ENCODE measurements at regions of chr12 and their contacts with region 1.

Region 1: DNA sequence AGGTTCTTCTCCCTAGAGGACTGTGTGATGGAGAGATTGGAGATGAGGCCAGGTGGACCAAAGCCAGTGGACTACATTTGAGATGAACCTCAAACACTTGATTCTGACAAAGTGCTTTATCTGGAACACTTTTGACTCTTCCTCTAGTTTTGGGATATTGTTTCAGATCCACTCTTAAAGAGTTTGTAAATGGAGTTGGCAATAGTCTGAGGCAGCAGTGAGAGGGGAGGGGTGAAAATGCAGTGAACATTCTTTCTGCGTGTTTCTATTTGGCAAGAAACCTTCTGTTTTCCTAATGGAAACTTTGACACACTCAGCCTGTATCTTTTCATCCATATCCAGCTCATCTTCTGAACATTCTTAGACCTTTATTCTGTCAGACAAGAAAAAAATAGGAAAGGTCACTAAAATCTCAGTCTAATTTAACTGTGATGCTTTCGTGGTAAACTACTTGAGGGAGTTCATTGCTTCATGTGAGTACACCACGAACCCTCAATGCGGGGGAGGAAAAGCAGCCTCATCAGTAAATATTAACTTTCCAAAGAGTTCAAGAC is 57.4 kb upstream of the KCNJ8 start:
- DNase-seq: peak in 1 of 2 donors; percentile 88
- H3K4me3 ChIP-seq: no peak overlapping the region
- H3K27ac ChIP-seq: peak overlapping the region; percentile 71
- H3K4me1 ChIP-seq: peaks cover 29% of the 10 kb centered on the region
- H3K27me3 ChIP-seq: no peaks in the 10 kb centered on the region
- CTCF ChIP-seq: no peak
- POLR2A ChIP-seq: no peak

Region 2: DNA sequence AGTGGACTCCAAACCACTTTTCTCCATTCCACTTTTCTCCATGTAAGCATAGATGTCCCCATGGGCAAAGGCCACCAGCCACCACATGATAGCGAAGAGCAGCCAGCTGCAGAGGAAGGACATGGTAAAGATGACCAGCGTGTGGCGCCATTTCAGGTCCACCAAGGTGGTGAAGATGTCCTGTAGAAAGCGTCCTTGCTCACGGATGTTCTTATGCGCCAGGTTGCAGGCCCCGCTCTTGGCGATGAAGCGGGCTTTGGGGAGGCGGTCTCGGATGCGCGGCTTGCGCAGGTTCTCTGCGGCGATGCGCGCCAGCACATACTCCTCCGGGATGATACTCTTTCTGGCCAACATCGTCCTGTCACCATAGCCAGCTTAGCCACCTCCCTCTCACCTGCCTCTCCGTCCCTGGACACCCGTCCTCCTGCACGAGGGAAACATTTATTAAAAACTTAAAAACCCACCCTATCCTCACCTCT is 58.6 kb before region 1 on chr12:
- intact Hi-C with region 1: loop called (anchors 10 kb)
- DNase-seq: no peak
- H3K4me3 ChIP-seq: peak overlapping the region; percentile 60 to 72
- H3K27ac ChIP-seq: peak overlapping the region; percentile 82
- H3K4me1 ChIP-seq: peaks cover 7% of the 10 kb centered on the region
- H3K27me3 ChIP-seq: no peaks in the 10 kb centered on the region
- CTCF ChIP-seq: no peak
- POLR2A ChIP-seq: no peak

Region 3: DNA sequence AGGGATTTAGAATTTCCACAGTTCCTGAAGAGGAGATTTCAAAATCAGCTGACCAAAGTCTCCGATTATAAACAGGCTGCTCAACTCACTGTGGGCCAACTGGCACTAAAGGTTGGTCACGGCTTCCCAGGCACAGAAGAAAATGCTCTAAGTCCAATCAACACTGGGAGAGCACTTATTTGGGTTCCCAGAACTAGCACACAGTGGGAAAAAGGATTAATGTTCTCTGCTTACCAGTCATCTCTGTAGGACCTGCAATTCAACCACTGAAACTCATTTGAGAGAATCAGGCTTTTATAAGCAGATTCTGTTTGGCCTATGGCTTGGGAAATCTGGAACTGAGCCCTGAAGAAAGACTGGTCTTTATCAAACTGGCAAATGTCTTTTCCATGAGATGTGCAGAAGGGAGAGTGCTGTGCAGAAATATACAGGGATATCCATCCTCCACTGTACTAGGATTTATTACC is 59.9 kb after region 1 on chr12:
- intact Hi-C with region 1: no loop called
- DNase-seq: no peak
- H3K4me3 ChIP-seq: no peak overlapping the region
- H3K27ac ChIP-seq: peak overlapping the region; percentile 64
- H3K4me1 ChIP-seq: peaks cover 15% of the 10 kb centered on the region
- H3K27me3 ChIP-seq: no peaks in the 10 kb centered on the region
- CTCF ChIP-seq: no peak
- POLR2A ChIP-seq: no peak

Region 4: DNA sequence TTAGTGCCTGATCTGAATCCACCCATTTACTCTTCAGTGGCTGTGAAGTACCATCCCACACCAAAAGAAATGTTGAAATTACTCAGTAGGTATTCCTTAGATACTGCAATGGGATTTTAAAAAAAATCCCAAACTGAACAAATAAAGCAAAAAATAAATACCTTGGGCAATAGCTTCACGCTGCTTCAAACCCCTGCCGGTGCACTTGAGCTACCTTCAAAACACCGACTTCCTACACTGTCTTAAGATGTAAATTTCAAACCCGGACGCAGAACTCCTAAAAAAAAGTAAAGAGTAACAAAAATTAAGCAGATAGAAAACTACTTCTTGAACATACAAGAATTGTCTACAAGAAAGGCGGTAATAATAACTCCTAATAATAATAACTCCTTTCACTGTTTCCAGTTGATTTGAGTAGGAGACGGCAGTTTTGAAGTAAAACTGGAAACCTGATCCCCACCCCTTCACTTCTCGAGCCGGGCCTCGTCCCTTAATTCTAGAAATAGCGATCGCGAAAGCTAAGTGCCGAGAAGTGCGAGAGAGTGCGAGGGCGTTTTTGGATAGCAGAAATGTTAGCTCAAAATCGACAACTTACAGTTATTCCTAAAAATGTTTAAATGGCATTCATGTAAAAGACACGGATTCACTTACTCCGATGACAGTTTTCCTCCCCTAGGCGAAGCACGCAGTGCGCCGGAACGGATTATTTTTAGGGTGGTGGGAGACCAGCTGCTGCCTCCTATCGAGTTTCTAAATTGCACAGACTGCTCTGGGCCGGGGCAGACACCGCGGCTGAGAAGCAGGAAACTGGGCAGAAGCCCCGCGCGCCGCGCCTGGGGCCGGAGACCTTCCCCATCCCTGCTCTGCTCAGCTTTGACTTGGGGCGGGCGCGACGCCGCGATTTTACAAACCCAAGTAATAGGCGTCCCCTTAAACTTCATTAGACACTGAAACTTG is 109.0 kb after region 1 on chr12 and contains the start of gene ABCC9:
- intact Hi-C with region 1: loop called (anchors 5 kb)
- DNase-seq: no peak
- H3K4me3 ChIP-seq: peak within 1 kb of the TSS; percentile 47 to 50
- H3K27ac ChIP-seq: peak within 1 kb of the TSS; percentile 85
- H3K4me1 ChIP-seq: peaks cover 15% of the 10 kb centered on the region
- H3K27me3 ChIP-seq: no peaks in the 10 kb centered on the region
- CTCF ChIP-seq: no peak
- POLR2A ChIP-seq: peak in 1 of 2 donors; percentile 46
- total RNA-seq, gene ABCC9: 24.6 TPM

Region 5: GRCh38 chr12:22409377-22410164 is 577.7 kb after region 1 on chr12:
- intact Hi-C with region 1: no loop called
- DNase-seq: no peak
- H3K4me3 ChIP-seq: no peak overlapping the region
- H3K27ac ChIP-seq: no peak overlapping the region
- H3K4me1 ChIP-seq: peaks cover 13% of the 10 kb centered on the region
- H3K27me3 ChIP-seq: no peaks in the 10 kb centered on the region
- CTCF ChIP-seq: no peak
- POLR2A ChIP-seq: no peak

Measured in vagina (tissue), 2 donors.